ENCODE measurements at regions of chr16 and their contacts with region 1.

Region 1: GRCh38 chr16:5336941-5337340 is 239.3 kb upstream of the EEF2KMT start:
- DNase-seq: no peak
- H3K4me3 ChIP-seq: no peak overlapping the region
- H3K27ac ChIP-seq: no peak overlapping the region
- H3K4me1 ChIP-seq: peaks cover 0 to 5% (median under 1%) of the 10 kb centered on the region in 4 experiments; a peak in 1 of 7 replicates
- H3K27me3 ChIP-seq: no peaks in the 10 kb centered on the region
- CTCF ChIP-seq: no peak
- EP300 ChIP-seq: no peak
- POLR2A ChIP-seq: no peak
- RAD21 ChIP-seq: no peak

Region 2: DNA sequence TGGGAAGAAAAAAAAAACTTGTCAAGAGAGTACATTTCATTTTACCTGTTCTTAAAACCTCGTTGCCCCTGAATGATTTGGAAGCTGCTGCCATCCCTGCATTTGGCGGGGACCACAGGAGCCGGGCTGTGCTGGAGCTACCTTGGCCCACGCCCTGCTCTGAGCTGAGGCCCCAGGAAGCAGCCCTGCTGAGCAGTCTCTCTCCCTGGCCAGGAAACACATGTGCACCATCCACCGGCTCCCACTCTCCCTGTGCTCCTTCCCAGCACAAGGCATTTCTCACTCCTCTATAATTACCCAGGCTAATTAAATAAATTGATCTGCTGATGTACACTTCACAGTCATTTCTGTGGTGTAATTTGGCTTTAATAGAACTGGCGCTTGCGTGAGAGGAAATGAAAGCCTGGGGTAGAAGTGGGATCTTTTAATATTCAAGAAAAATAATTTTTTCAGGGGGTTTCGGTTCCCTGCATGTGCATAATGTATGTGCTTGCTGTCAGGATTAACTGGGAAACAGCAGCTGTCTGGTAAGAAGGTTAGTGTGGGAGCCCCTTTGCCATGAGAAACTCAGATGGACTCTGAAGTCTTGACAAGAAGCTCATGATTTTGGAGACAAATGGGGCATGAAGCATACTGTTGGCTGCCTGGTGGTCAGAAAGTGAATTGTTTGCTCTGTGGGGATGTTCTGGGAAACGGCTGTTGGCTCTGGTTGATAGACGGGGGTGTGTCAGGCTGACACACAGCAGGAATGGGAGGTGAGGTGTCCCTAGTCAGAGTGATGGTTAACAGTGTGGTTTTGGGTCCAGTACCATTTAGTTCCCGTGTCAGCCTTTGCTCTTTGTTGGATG is 13.0 kb after region 1 on chr16:
- CTCF ChIA-PET with region 1: interaction called, 17 read pairs
- POLR2A ChIA-PET with region 1: no interaction called
- DNase-seq: peak in 1 of 2 experiments; percentile 2
- H3K4me3 ChIP-seq: no peak overlapping the region
- H3K27ac ChIP-seq: no peak overlapping the region
- H3K4me1 ChIP-seq: peaks cover 0 to 5% (median 1%) of the 10 kb centered on the region in 4 experiments; a peak in 4 of 7 replicates
- H3K27me3 ChIP-seq: no peaks in the 10 kb centered on the region
- CTCF ChIP-seq: peak; percentile 17 to 53 (median 21); a peak in 3 of 4 replicates
- EP300 ChIP-seq: no peak
- POLR2A ChIP-seq: no peak
- RAD21 ChIP-seq: peak in 1 of 2 experiments; percentile 34; a peak in 1 of 4 replicates